ENCODE measurements at regions of chr17 and their contacts with region 1.

Region 1: DNA sequence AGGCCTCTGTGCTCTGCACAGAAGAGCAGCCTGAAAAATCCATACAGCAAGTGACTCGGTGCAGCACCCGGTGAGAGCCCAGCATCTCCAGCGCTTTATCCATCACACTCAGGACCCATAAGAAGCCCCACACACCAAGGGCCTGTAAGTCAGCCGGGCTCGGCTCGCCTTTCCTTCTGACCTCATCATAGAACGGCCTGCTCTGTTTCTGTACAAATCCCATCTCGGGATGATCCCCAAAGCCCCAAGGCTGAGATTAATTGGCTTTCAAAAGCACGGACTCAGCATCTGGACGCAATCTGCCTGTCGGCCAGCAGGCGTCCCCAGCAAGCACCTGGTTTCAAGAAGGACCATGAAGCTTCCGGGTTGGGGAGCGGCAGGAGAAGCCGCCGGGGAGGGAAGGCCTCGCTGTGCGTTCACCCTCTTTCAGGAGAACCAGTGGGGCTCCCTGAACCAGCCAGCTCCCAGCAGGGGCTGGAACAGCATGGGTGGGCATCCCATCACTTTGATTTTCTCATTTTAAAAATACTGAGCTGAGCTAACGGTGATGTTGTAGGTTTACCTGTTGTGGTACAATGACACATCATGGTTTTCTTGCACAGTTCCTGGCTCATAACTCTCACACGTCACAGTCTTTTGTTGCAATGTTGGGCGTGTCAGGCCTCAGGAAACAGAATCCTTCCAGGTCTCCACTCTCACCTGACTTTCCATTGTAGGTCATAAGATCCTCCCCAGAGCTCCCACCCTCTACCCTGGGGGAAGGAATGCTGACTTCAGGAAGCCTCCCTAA is 6.7 kb downstream of the CCDC57 start:
- DNase-seq: peak; percentile 88
- CTCF ChIP-seq: peak; percentile 89

Region 2: GRCh38 chr17:82216301-82217119 is 10.6 kb after region 1 on chr17:
- CTCF ChIA-PET with region 1: interaction called, 15 read pairs
- POLR2A ChIA-PET with region 1: no interaction called
- DNase-seq: peak; percentile 61
- CTCF ChIP-seq: no peak

Region 3: DNA sequence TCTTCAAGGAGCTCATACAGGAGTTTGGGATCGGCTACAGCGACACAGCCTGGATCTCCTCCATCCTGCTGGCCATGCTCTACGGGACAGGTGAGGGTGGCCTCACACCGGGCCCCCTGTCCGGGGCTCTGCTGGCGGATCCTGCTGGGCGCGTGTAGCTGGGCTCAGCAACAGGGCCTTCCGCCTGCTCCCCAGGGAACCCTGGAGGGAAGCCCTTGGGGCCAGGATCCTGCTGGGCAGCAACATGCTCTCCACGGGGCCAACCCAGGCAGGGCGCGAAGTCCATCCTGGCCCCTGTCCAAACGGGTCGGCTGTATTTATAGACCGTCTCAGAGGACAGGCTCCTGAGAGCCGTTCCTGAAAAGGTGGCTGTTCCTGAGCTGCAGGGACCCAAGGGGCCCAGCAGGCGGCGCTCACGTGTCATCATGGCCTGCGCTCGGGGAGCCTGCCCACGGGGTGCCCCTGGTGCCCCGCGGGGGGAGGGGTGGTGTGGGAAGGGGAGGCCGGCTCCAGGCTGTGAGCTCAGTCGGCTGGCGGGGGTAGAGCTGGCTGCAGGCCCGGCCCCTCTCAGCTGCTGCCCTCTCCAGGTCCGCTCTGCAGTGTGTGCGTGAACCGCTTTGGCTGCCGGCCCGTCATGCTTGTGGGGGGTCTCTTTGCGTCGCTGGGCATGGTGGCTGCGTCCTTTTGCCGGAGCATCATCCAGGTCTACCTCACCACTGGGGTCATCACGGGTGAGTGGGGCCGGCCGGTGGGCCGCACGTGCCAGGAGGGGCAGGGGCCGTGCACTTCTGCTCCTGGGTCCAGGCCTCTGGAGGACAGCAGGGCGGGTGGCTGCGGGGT is 30.4 kb after region 1 on chr17:
- CTCF ChIA-PET with region 1: interaction called, 12 read pairs
- POLR2A ChIA-PET with region 1: no interaction called
- DNase-seq: no peak
- CTCF ChIP-seq: peak; percentile 86